Astrocyte of the cerebellum (primary cell): ENCODE measurements at regions of chr17 and their contacts with region 1.

Region 1: GRCh38 chr17:42517516-42517915 is 18.5 kb upstream of the NAGLU start:
- DNase-seq: peak; percentile 63
- H3K4me3 ChIP-seq: no peak overlapping the region
- CTCF ChIP-seq: peak; percentile 93

Region 2: DNA sequence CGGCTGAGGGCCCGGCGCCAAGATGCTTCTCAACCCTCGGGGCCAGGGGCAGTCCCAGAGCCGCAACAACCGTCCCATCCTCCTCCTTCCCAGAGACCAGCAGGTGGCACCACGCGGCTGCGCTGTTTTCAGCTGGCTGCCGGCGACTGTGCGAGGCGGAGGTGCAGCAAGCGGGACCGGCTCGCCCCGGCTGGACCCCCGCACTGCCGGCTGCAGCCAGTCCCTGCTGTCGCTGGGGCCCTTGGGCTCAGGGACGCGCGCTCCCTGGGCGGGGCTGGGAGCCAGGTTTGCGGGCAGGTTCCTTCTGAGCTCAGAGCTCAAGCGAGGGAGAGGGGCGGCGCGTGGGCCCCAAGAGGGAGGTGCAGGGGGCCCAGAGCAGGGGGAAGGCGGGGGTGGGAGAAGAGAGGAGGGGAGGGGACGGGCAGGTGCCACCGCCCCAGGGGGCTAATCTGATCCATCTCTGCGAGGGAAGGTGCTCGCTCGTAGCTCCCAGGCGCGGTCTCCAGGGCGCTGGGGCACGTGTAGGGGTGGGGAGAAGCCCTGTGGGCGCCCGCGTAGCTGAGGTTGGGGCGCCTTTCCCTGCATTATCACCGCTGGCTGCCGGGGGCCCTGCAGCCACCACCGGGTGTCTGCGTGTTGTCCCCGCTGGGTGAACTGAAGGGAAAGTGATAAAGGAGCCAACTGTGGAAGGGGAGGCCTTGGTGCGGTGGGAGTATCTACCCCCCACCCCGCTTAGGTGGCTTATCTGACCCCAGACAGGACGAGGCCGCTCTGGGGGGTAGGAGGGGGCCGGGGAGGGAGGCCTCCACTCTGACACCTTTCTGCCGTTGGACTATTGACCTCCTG is 205.0 kb before region 1 on chr17:
- in situ Hi-C with region 1: loop called (anchors 10 kb)
- DNase-seq: peak; percentile 45
- H3K4me3 ChIP-seq: no peak overlapping the region
- CTCF ChIP-seq: peak; percentile 66

Region 3: GRCh38 chr17:42422958-42423712 is 94.4 kb before region 1 on chr17 and contains the start of gene CAVIN1:
- in situ Hi-C with region 1: loop called (anchors 5 kb)
- DNase-seq: peak; percentile 98
- H3K4me3 ChIP-seq: peak within 1 kb of the TSS; percentile 100
- CTCF ChIP-seq: no peak

Region 4: DNA sequence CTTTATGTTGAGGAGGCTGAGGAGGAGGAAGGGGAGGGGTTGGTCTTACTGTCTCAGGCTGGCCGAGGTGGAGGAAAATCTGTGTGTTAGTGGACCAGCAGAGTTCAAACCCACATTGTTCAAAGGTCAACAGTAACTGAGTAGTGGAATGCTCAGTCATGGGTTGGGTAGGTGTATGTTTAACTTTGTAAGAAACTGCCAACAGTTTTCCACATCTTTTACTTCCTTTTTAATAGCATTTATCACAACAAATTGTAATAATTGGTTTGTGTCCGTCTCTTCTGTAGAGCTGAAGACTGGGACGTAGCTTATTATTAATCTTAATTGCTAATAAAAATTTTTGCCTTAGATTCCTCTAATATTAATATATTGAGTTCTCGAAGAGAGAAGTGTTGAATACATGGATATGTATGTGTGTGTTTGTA is 53.5 kb before region 1 on chr17:
- in situ Hi-C with region 1: no loop called
- DNase-seq: no peak
- H3K4me3 ChIP-seq: no peak overlapping the region
- CTCF ChIP-seq: no peak

Region 5: GRCh38 chr17:42484304-42484703 is 33.2 kb before region 1 on chr17:
- in situ Hi-C with region 1: no loop called
- DNase-seq: no peak
- H3K4me3 ChIP-seq: no peak overlapping the region
- CTCF ChIP-seq: no peak